Aorta (tissue), 5 donors: ENCODE measurements at regions of chr11 and their contacts with region 1.

Region 1: DNA sequence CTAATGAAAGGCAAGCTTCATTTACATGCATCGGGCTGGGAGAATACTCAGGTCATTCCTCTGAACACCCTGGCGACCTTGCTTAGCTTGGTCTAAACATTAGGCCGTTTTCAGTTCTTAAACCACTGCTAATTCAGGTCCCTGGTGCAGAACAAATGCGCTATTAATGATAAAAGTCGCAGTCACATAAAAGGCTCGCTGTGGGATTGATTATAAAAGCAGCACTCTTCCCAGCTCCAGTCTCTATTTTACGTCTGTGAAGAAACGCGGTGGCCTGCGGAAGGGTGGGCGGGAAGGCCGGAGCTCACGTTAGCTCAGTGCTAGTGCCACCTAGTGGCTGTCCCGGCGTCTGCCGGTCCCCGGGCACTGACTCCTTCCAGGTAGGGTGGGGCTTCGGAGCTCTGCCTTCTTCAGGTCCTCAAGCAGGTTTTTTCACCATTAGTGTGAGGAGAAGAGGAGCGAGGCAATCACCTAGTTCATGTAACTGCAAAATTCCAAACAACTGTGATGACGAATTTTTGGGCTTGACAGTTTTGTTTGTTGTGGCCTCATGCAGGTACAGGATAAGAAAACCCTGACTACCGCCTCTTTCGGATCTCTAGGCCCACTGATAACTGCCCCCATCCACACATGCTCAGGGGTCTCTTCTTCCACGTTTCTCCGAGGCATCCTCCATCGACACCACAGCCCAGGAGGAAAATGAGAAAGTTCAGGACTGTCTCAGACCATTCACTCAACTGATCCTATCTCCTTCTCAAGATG is 66.5 kb upstream of the CLMP start:
- DNase-seq: peak; percentile 83 to 94
- ATAC-seq: peak; percentile 91
- H3K4me3 ChIP-seq: no peak overlapping the region
- H3K27ac ChIP-seq: no peak overlapping the region
- H3K4me1 ChIP-seq: no peaks in the 10 kb centered on the region
- H3K27me3 ChIP-seq: no peaks in the 10 kb centered on the region

Region 2: GRCh38 chr11:123103326-123103980 is 158.1 kb before region 1 on chr11:
- intact Hi-C with region 1: loop called in 1 of 2 experiments (anchors 5 kb)
- DNase-seq: peak in 1 of 2 donors; percentile 69
- ATAC-seq: peak; percentile 84
- H3K4me3 ChIP-seq: no peak overlapping the region
- H3K27ac ChIP-seq: peak overlapping the region; percentile 22 to 82
- H3K4me1 ChIP-seq: no peaks in the 10 kb centered on the region
- H3K27me3 ChIP-seq: no peaks in the 10 kb centered on the region